Mucosa of descending colon (tissue), 3 donors: ENCODE measurements at regions of chr9 and their contacts with region 1.

Region 1: DNA sequence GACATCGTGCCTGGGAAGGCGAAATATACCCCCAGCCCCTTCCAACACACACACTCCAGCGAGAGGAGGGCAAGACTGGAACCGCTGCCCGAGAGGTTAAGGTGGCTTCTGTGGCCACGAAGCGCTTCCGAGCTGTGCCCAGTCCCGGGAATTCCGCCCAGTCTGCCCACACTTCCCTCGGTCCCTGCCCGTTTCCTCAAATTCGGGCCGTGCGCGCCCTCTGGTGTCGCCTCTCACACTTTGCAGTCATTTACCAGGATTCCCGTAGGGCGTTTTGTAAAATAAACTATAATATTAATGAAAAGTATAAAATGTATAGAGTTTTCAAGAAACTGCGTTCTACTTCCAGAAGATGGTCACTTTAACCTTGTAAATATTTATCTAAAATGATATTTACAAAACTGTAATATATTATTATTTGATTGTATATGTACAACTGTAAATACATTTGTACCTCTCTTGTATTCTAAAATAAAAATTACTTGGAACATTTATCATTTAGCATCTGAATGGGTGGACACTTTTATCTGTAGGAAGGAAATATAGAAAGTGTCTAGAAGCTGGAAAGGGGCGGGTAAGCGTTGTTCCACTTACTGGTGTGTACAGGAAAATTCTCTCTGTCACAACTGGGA is 11.0 kb upstream of the EXOSC2 start:
- DNase-seq: peak; percentile 81 to 86 (median 83)
- ATAC-seq: peak; percentile 86
- H3K4me3 ChIP-seq: no peak overlapping the region
- H3K4me1 ChIP-seq: peaks cover 10% of the 10 kb centered on the region
- CTCF ChIP-seq: peak; percentile 71

Region 2: GRCh38 chr9:130461218-130461630 is 221.4 kb before region 1 on chr9:
- intact Hi-C with region 1: loop called (anchors 5 kb)
- DNase-seq: peak in 2 of 3 donors; percentile 73 to 74
- ATAC-seq: peak; percentile 67
- H3K4me3 ChIP-seq: no peak overlapping the region
- H3K4me1 ChIP-seq: no peaks in the 10 kb centered on the region
- CTCF ChIP-seq: peak; percentile 80

Region 3: DNA sequence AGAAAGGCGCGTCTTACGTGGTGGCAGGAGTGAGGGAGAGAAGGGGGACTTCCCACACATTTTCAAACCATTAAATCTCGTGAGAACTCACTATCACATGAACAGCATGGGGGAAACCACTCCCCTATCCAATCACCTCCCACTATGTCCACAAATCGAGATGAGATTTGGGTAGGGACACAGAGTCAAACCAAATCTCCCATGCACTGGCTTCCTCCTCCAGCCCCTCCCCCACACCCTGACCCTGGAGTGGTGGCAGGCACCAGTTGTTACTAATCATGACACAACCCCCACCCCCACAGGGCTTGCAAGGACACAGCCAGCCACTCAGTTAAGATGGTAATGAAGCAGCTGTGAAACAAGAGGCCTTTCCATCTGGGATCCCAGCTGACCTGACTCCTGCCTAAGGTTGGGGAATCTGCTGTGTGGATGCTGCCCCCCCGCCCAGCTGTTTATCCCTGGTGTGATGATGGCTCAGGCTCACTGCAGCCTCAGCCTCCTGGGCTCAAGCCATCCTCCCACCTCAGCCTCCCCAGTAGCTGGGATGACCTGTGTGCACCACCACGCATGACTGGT is 160.3 kb before region 1 on chr9:
- intact Hi-C with region 1: no loop called
- DNase-seq: no peak
- ATAC-seq: no peak
- H3K4me3 ChIP-seq: no peak overlapping the region
- H3K4me1 ChIP-seq: no peaks in the 10 kb centered on the region
- CTCF ChIP-seq: no peak